ENCODE measurements at regions of chr12 and their contacts with region 1.

Region 1: GRCh38 chr12:102484428-102484958 is 4.1 kb upstream of the IGF1 start:
- DNase-seq: peak; percentile 63
- ATAC-seq: peak; percentile 44 to 75

Region 2: GRCh38 chr12:101939856-101940265 is 544.6 kb before region 1 on chr12:
- intact Hi-C with region 1: loop called in 1 of 2 experiments (anchors 5 kb)
- DNase-seq: peak; percentile 46
- ATAC-seq: peak; percentile 51 to 62

Region 3: DNA sequence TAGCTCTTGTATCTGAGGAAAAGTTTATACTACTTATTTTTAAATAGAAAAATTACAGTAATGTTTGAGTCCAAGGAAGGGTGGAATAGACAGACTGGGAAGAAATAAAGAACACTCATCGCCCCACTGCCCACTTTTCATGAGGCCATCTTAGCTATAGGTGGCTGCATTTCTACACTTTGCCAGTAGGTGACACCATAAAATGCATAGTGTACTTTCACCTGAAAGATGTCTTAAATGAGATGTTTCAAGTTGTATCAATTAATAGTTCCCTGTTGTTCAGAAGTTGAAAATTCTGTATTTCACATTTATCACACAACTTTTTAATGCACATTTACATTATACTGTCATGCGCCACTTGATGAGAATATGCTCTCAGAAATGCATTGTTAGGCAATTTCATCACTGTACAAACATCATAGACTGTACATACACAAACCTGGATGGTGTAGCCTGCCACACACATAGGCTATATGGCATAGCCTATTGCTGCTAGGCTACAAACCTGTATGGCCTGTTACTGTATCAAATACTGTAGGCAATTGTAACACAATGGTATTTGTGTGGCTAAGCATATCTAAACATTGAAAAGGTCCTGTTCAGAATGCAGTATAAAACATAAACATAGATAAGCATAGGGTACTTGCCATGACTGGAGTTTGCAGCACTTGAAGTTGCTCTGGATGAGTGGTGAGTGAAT is 314.4 kb before region 1 on chr12:
- intact Hi-C with region 1: loop called (anchors 2 to 10 kb)
- DNase-seq: no peak
- ATAC-seq: peak in 1 of 2 donors; percentile 38

Region 4: GRCh38 chr12:102343361-102344121 is 141.0 kb before region 1 on chr12:
- intact Hi-C with region 1: loop called in 1 of 2 experiments (anchors 10 kb)
- DNase-seq: no peak
- ATAC-seq: no peak

Region 5: GRCh38 chr12:102816816-102817434 is 332.4 kb after region 1 on chr12:
- intact Hi-C with region 1: no loop called
- DNase-seq: no peak
- ATAC-seq: peak; percentile 38 to 47